ENCODE measurements at regions of chr14 and their contacts with region 1.

Region 1: GRCh38 chr14:68955164-68955921 is 23.8 kb downstream of the ACTN1 start:
- DNase-seq: no peak
- ATAC-seq: peak; percentile 17
- H3K4me3 Mint-ChIP-seq: peak overlapping the region; percentile 37
- H3K27ac Mint-ChIP-seq: peak overlapping the region; percentile 87
- H3K4me1 Mint-ChIP-seq: peaks cover 91% of the 10 kb centered on the region
- H3K27me3 Mint-ChIP-seq: no peaks in the 10 kb centered on the region
- CTCF ChIP-seq: no peak

Region 2: DNA sequence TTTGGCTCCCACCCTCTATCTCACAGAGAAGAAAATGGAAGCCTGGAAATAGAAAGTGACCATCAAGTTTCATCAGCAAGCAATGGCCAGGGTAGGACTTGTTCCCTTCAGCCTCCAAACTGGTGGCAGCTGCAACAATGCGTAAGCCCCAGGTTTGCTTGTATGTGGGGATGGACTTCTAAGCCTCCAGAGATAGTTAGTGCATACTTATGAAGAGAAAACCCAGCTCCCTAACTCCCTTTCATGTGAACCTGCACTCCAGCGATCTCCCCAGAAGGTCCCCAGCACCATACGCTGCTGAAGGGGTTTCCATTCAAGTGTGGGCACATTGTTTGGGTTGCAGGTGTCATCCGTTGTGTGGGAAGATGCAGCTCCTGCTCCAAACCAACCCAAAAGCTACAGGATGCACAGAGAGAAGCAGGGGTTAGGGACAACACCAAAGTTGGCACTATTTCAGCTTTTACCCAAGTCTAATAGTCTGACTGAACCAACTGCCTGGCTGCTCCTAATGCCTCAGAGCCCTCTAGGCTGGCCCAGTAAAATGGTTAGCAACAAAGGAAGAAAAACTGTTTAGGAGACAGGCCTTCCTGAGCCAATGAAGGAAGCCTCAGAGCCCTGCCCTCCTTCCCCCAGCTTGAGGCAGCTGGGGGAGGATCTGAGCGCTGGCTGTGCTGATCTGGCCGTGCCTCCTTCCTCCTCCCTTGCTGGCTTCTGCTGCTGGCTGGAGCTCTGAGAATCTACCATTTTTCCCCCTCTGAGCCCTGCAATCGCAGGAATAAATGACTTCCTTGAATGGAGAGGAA is 174.8 kb before region 1 on chr14:
- CTCF ChIA-PET with region 1: no interaction called
- POLR2A ChIA-PET with region 1: no interaction called
- intact Hi-C with region 1: no loop called
- DNase-seq: peak; percentile 55
- ATAC-seq: peak; percentile 24
- H3K4me3 Mint-ChIP-seq: peak overlapping the region; percentile 52
- H3K27ac Mint-ChIP-seq: peak overlapping the region; percentile 90
- H3K4me1 Mint-ChIP-seq: peaks cover 67% of the 10 kb centered on the region
- H3K27me3 Mint-ChIP-seq: no peaks in the 10 kb centered on the region
- CTCF ChIP-seq: no peak

Region 3: GRCh38 chr14:68970038-68970612 is 14.8 kb after region 1 on chr14:
- CTCF ChIA-PET with region 1: interaction called, 10 read pairs
- POLR2A ChIA-PET with region 1: interaction called, 40 read pairs
- intact Hi-C with region 1: no loop called
- DNase-seq: peak; percentile 44
- ATAC-seq: peak; percentile 6
- H3K4me3 Mint-ChIP-seq: peak overlapping the region; percentile 55
- H3K27ac Mint-ChIP-seq: peak overlapping the region; percentile 84
- H3K4me1 Mint-ChIP-seq: peaks cover 84% of the 10 kb centered on the region
- H3K27me3 Mint-ChIP-seq: no peaks in the 10 kb centered on the region
- CTCF ChIP-seq: no peak

Region 4: DNA sequence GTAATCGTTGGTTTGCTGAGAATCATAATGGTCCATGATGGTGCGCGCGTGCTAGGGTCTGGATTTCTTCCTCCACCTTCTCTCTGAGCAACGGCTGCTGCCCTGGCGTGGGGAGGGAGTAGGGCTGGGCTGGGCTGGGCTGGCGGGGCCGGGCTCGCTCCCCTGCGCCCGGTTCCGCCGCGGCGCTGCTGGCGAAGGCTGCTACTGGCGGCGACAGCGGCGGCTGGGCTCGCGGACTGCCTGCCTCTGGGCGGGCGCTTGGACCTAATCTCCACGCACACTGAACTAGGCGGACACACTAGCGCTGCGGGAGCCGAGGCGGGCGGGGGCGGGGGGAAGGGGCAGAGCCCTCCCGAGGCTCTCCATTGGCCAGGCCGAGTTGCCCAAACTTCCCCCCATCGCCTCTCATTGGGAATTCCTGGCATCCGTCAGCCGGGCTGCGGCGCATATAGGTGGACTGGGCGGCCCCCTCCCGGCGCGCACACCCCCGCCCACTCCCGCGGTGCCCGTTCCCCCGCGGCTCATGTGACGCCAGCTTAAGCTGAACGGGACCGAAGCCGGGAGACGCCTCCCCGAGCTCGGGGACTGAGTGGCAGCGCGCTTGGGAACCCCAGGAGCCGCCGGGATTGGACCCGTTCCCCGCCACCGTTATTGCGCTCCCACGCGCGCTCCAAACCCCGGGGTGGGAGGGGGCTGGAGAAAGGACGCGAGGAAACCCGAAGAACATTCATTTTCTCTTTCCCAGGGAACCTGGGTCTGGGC is 23.9 kb after region 1 on chr14 and contains the start of gene ACTN1:
- CTCF ChIA-PET with region 1: interaction called, 7 read pairs
- POLR2A ChIA-PET with region 1: interaction called, 20 read pairs
- intact Hi-C with region 1: no loop called
- DNase-seq: peak; percentile 87
- ATAC-seq: peak; percentile 61
- H3K4me3 Mint-ChIP-seq: peak within 1 kb of the TSS; percentile 83
- H3K27ac Mint-ChIP-seq: peak within 1 kb of the TSS; percentile 96
- H3K4me1 Mint-ChIP-seq: peaks cover 53% of the 10 kb centered on the region
- H3K27me3 Mint-ChIP-seq: no peaks in the 10 kb centered on the region
- CTCF ChIP-seq: no peak
- total RNA-seq, gene ACTN1: 214 TPM

Measured in activated CD8-positive, alpha-beta T cell treated with anti-CD3 and anti-CD28 coated beads for 36 hours (primary cell).